Activated naive CD4-positive, alpha-beta T cell treated with anti-CD3 and anti-CD28 coated beads for 36 hours (primary cell): ENCODE measurements at regions of chr2 and their contacts with region 1.

Region 1: DNA sequence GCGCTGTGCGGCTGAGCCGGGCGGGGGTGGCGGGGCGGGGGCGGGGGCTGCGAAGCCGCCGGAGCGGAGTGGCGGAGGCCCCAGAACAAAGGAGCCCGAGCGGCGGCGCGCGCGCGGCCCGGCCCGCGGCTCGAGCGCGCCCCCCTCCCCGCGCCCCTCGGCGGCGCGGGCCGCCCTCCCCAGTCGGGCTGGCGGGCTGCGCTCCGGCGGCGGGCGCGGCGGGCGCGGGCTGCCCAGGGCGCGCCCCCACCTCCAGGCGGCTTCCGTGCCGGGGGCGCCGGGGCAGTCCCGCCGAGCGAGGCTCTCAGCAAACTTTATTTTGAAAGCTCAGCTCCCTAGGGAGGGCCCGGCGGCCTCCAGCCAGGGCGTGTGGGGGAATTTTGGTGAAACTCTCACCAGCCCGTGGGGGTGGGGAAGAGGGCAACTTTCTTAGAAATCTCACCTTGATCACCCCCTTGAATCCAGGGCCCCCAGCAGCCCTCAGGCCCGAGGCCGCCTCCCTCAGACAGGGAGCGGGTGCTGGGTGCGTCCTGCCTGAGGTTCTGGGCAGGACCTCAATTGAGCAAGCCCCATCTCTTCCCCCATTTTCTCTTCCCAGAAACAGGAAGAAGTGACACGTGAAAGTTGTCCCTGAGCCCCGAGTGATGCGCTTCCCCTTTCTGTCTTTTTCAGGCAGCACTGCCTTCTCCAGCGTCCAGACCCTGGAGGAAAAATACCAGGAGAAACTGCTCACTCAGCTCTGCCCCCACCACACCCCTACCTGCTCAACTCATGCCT is 786 bp downstream of the TET3 start:
- DNase-seq: peak; percentile 77
- H3K4me3 Mint-ChIP-seq: peak overlapping the region; percentile 80
- H3K27ac Mint-ChIP-seq: peak overlapping the region; percentile 90
- H3K4me1 Mint-ChIP-seq: peaks cover 64% of the 10 kb centered on the region
- H3K27me3 Mint-ChIP-seq: no peaks in the 10 kb centered on the region

Region 2: DNA sequence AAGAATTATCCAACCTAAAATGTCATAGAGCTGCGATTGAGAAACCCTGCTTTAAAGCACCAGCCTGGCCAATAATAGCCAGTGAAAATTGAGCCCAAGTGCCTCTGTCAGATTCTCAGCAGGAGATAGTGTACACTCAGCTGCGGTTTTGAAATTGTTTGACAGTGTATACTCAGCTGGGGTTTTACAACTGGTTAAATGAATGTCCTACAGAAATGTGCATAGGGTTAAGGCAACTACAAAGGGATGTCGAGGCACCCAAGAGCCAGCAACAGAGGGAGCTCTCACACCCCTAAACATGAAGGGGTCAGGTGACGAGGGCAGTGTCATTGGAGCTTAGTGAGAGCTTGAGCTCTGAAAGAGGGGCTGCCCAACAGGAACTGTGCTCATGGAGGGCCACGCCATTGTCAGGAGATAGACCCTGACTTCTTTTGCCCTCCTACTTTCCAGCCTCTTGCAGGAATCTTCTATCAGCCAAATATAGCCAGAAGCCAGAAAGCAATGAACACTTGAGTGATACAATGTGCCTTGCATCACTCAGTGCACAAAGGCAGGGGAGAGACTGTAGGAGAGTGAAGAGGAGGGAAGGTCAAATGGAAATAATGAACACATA is 77.5 kb before region 1 on chr2:
- CTCF ChIA-PET with region 1: interaction called, 35 read pairs
- intact Hi-C with region 1: loop called (anchors 1 kb)
- DNase-seq: peak; percentile 79
- H3K4me3 Mint-ChIP-seq: no peak overlapping the region
- H3K27ac Mint-ChIP-seq: no peak overlapping the region
- H3K4me1 Mint-ChIP-seq: peaks cover 5% of the 10 kb centered on the region
- H3K27me3 Mint-ChIP-seq: no peaks in the 10 kb centered on the region

Region 3: GRCh38 chr2:73926493-73927338 is 58.8 kb before region 1 on chr2 and contains the start of gene DGUOK:
- CTCF ChIA-PET with region 1: interaction called, 4 read pairs
- intact Hi-C with region 1: loop called (anchors 1 kb)
- DNase-seq: peak; percentile 99
- H3K4me3 Mint-ChIP-seq: peak within 1 kb of the TSS; percentile 87
- H3K27ac Mint-ChIP-seq: peak within 1 kb of the TSS; percentile 94
- H3K4me1 Mint-ChIP-seq: peaks cover 44% of the 10 kb centered on the region
- H3K27me3 Mint-ChIP-seq: no peaks in the 10 kb centered on the region
- total RNA-seq, gene DGUOK: 112 to 115 TPM

Region 4: GRCh38 chr2:73963385-73964120 is 21.9 kb before region 1 on chr2:
- CTCF ChIA-PET with region 1: interaction called, 3 read pairs
- intact Hi-C with region 1: loop called (anchors 1 kb)
- DNase-seq: peak; percentile 70
- H3K4me3 Mint-ChIP-seq: peak overlapping the region; percentile 38
- H3K27ac Mint-ChIP-seq: peak overlapping the region; percentile 69
- H3K4me1 Mint-ChIP-seq: peaks cover 39% of the 10 kb centered on the region
- H3K27me3 Mint-ChIP-seq: no peaks in the 10 kb centered on the region

Region 5: DNA sequence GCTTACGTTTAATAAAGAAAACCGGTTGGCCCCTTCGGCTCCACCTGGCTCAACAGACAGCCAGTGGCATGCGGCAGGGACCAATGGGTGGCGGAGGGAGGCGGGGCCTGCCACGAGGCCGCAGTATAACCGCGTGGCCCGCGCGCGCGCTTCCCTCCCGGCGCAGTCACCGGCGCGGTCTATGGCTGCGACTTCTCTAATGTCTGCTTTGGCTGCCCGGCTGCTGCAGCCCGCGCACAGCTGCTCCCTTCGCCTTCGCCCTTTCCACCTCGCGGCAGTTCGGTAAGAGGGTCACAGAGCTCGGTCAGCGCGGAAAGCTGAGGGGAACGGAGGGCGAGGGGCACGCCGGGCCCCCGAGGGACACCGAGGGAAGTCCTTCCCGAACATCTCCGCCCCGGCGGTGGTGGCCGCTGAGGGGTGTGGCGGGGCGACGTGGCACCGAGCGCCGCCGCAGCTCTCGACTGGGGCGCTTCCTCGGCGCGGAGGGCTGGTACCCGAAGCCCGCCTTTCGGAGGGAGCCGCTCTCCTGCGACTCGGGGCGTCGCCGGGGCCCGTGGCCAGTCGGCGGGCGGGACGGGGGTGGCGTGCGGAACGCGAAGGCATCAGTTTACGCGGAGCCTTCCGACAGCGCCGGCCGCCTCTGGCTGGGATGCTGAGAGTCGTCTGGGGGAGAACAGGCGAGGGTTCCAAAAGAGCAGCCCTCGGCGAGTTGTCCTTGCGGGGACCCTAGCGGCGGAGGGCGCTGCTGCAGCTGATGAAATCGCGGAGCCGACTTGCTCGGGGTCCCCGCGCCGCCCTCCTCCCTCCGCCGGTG is 213.2 kb after region 1 on chr2 and contains the start of gene MTHFD2:
- CTCF ChIA-PET with region 1: interaction called, 3 read pairs
- intact Hi-C with region 1: loop called (anchors 5 kb)
- DNase-seq: peak; percentile 95
- H3K4me3 Mint-ChIP-seq: peak within 1 kb of the TSS; percentile 97
- H3K27ac Mint-ChIP-seq: peak within 1 kb of the TSS; percentile 99
- H3K4me1 Mint-ChIP-seq: peaks cover 36% of the 10 kb centered on the region
- H3K27me3 Mint-ChIP-seq: no peaks in the 10 kb centered on the region
- total RNA-seq, gene MTHFD2: 683 to 692 TPM